Activated CD4-positive, alpha-beta memory T cell treated with anti-CD3 and anti-CD28 coated beads, Interleukin-2, amount 10 ng/mL, durations not matched to agents 7 days and 5 days (primary cell): ENCODE measurements at regions of chr20 and their contacts with region 1.

Region 1: DNA sequence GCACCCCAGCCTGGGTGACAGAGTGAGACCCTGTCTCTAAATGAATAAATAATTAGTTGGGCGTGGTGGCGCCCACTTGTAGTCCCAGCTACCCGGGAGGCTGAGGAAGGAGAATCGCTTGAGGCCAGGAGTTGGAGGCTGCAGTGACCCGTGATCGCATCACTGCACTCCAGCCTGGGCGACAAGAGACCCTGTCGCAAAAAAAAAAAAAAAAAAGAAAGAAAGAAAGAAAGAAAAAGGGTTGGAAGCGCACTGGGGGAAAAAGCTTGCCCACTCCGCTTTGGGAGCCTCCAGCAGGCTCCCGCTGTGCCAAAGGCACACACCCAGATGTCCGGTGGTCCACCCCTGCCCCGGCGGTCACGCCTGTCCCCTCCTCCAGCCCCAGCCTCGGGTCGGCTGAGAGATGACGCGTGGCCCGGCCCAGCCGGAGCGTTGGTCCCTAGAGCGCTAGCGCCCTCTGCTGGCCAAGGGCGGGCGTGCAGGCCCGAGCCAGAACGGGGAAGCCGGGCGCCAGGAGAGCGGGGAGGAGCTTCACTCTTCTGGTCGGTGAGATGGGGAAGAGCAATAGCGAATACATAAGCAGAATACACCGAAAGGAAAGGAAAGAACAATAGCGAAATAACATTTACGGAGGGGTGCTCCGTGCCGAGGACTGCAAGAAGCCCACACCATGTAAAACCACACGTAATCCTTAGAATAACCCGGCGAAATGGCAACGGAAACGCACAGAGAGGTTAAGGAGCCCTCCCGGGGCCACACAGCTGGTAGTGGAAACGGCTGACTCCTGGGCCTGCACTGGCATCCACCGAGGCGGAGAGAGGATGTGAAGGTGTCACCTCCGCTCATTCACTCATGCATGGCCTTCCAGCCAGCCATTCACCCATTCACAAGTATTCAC is 41.7 kb downstream of the UBE2V1 start:
- DNase-seq: peak; percentile 91
- H3K4me3 Mint-ChIP-seq: peak overlapping the region; percentile 33
- H3K27ac Mint-ChIP-seq: no peak overlapping the region
- H3K4me1 Mint-ChIP-seq: peaks cover 4% of the 10 kb centered on the region
- H3K27me3 Mint-ChIP-seq: peaks cover 2% of the 10 kb centered on the region

Region 2: DNA sequence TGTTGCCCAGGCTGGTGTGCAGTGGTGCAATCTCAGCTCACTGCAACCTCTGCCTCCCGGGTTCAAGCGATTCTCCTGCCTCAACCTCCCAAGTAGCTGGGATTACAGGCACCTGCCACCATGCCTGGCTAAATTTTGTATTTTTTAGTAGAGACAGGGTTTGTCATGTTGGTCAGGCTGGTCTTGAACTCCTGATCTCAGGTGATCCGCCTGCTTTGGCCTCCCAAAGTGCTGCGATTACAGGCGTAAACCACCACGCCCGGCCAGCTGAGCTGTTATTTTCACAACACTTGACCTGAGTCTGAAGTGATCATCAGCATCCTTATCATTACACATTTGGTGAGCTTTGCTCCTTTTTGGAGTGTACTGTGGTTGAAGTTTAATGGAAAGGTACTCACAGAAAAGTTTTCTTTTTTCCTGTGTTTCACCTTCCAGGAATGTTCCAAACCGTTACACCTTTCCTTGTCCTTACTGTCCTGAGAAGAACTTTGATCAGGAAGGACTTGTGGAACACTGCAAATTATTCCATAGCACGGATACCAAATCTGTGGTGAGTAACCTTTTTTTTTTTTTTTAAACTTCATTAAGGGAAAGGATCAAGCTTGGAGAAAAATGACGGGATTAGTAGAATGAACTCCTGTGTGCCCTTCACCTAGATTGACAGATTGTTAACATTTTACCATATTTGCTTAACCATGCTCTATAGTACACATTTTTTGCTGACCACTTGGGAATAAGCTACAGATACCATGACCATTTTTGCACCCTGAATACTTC is 125.4 kb before region 1 on chr20:
- CTCF ChIA-PET with region 1: interaction called, 10 read pairs
- POLR2A ChIA-PET with region 1: no interaction called
- DNase-seq: no peak
- H3K4me3 Mint-ChIP-seq: no peak overlapping the region
- H3K27ac Mint-ChIP-seq: no peak overlapping the region
- H3K4me1 Mint-ChIP-seq: peaks cover 14% of the 10 kb centered on the region
- H3K27me3 Mint-ChIP-seq: no peaks in the 10 kb centered on the region

Region 3: DNA sequence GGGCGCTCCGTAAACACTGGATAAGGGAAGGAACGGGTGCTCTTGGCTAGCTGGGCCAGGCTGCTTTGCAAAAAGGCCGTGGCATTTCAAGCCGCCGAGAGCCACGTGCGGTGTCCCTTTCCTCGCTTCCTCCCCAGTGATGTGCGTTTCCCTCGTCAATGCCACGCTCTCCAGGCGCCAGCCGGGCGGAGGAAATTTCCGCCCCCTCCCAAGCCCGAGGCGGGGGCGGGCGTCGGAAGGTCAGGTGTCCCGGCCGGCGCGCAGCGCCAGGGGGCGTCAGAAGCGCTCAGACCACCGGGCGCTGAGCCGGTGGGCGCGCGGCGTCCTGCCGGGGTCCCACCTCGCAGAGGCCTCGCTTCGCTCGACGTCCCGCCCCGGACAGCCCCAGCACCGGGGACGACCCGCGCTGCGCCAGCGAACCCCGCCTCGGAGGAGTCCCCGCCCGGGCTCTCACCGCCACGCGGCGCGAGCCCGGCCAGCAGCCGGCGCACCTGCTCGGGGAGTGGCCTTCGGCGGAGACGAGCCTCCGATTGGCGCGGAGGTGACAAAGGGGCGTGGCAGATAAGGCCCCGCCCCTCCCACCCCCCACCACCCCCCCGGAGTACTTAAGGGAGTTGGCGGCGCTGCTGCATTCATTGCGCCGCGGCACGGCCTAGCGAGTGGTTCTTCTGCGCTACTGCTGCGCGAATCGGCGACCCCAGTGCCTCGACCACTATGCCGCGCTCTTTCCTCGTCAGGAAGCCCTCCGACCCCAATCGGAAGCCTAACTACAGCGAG is 88.7 kb before region 1 on chr20 and contains the start of gene SNAI1:
- CTCF ChIA-PET with region 1: interaction called, 300 read pairs
- POLR2A ChIA-PET with region 1: interaction called, 11 read pairs
- DNase-seq: peak; percentile 81
- H3K4me3 Mint-ChIP-seq: peak within 1 kb of the TSS; percentile 41
- H3K27ac Mint-ChIP-seq: no peak within 1 kb of the TSS
- H3K4me1 Mint-ChIP-seq: peaks cover 26% of the 10 kb centered on the region
- H3K27me3 Mint-ChIP-seq: peaks cover 28% of the 10 kb centered on the region
- total RNA-seq, gene SNAI1: 0.28 to 0.38 TPM

Region 4: DNA sequence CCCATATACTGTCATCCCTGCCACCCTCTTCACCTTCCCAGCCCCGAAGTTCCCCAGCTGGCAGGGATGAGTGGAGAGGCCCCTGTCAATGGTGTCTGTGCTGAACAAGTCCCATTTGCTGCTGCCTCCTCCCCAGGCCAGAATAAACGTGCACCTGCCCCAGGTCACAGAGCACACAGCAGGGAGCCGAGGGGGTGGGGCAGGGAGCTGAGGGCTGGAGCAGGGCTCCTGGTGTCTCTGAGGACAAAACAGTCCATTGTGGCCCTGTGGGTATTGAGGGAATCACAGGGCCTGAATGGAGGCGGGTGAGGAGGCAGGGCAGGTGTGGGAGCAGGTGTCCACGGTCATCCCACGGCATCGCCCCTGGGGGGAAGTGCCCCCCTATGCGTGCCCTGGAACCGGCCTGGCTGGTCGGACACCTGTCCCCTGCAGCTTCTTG is 32.6 kb before region 1 on chr20:
- CTCF ChIA-PET with region 1: interaction called, 14 read pairs
- POLR2A ChIA-PET with region 1: no interaction called
- DNase-seq: no peak
- H3K4me3 Mint-ChIP-seq: no peak overlapping the region
- H3K27ac Mint-ChIP-seq: no peak overlapping the region
- H3K4me1 Mint-ChIP-seq: no peaks in the 10 kb centered on the region
- H3K27me3 Mint-ChIP-seq: no peaks in the 10 kb centered on the region

Region 5: GRCh38 chr20:50085452-50086365 is 14.5 kb after region 1 on chr20:
- CTCF ChIA-PET with region 1: interaction called, 52 read pairs
- POLR2A ChIA-PET with region 1: interaction called, 3 read pairs
- DNase-seq: peak; percentile 38
- H3K4me3 Mint-ChIP-seq: peak overlapping the region; percentile 41
- H3K27ac Mint-ChIP-seq: peak overlapping the region; percentile 67
- H3K4me1 Mint-ChIP-seq: peaks cover 17% of the 10 kb centered on the region
- H3K27me3 Mint-ChIP-seq: no peaks in the 10 kb centered on the region

Region 6: GRCh38 chr20:50115591-50116372 is 44.5 kb after region 1 on chr20:
- CTCF ChIA-PET with region 1: interaction called, 10 read pairs
- POLR2A ChIA-PET with region 1: no interaction called
- DNase-seq: peak; percentile 91
- H3K4me3 Mint-ChIP-seq: peak overlapping the region; percentile 80
- H3K27ac Mint-ChIP-seq: peak overlapping the region; percentile 85
- H3K4me1 Mint-ChIP-seq: peaks cover 52% of the 10 kb centered on the region
- H3K27me3 Mint-ChIP-seq: no peaks in the 10 kb centered on the region

Region 7: GRCh38 chr20:50165684-50166554 is 94.7 kb after region 1 on chr20:
- CTCF ChIA-PET with region 1: interaction called, 13 read pairs
- POLR2A ChIA-PET with region 1: no interaction called
- DNase-seq: peak; percentile 87
- H3K4me3 Mint-ChIP-seq: peak overlapping the region; percentile 76
- H3K27ac Mint-ChIP-seq: peak overlapping the region; percentile 84
- H3K4me1 Mint-ChIP-seq: peaks cover 16% of the 10 kb centered on the region
- H3K27me3 Mint-ChIP-seq: peaks cover 4% of the 10 kb centered on the region